PC-9 (cell line): ENCODE measurements at regions of chr10 and their contacts with region 1.

Region 1: DNA sequence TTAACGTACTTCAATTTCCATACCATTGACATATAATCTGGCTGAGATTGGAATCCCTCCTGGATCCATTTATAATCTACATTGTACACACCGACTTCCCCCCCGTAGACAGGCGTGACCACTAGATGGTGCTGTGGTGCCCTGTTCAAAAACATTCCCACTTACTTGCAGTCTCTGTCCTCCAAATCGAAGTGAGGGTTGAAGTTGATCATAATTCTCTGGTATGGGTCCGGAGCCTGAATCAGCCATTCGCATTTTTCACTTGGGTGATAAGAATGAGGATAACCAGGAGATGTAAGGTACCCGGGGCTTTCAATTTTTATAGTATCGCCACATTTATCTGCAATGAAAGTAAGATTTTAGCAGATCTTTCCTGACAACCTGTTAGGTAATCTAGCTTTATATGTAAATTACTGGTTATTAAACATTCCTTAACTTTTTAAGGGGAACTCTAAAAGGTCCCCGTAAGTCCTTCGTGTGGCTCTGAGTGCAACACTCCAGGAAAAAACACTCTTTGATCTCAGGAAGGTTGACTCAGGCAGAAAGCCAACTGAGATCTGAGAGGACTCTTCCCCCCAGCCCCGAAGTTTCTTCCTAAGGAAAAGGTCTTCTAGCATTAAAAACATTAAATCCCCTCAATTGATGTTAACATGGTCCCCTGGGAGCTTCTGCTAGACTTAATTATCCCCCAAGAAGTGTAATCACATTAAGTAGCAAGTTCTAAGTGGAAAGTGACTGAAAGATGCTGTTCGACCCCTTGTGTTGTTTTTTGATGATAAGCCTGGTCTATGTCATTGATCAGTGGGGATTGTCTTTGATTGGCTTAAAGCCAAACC is 3.7 kb downstream of the NRP1 start:
- DNase-seq: peak; percentile 54 to 79
- H3K4me3 ChIP-seq: peak overlapping the region; percentile 92
- H3K27ac ChIP-seq: peak overlapping the region; percentile 28; the same call in 1 of the 2 replicates
- H3K4me1 ChIP-seq: peaks cover 55% of the 10 kb centered on the region
- H3K27me3 ChIP-seq: no peaks in the 10 kb centered on the region
- CTCF ChIP-seq: peak; percentile 80

Region 2: DNA sequence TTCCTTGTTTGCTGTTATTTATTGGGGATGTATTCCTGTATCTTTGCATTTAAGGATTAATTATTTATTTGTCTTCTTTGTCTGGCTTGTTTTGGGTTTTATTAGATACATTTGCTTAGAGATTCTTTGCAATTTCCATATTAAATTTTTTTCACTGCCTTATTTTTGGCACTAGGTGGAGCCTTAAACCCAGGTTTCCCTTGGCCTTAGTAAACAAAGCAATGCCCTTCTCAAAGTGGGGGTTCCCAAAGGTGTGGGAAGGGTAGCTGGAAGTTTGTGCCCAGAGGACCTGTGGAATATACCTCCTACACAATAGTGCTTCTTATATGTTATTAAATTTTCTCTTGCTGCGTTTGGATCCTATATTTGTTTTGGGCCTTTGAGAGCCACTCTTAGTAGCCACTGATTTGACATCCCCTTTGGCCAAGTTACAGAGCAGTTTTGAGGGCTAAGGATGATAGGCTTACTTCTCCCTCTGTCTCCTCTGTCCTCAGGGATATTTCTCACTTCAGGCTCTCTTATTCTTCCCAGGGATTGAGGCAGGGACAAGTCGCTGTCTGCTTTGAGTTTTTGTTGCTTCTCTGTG is 535.1 kb before region 1 on chr10:
- CTCF ChIA-PET with region 1: no interaction called
- POLR2A ChIA-PET with region 1: no interaction called
- intact Hi-C with region 1: loop called (anchors 5 kb)
- DNase-seq: peak in 1 of 2 experiments; percentile 7
- H3K4me3 ChIP-seq: no peak overlapping the region
- H3K27ac ChIP-seq: no peak overlapping the region
- H3K4me1 ChIP-seq: no peaks in the 10 kb centered on the region
- H3K27me3 ChIP-seq: no peaks in the 10 kb centered on the region
- CTCF ChIP-seq: peak; percentile 77

Region 3: GRCh38 chr10:33273295-33274002 is 57.3 kb before region 1 on chr10:
- CTCF ChIA-PET with region 1: no interaction called
- POLR2A ChIA-PET with region 1: interaction called, 3 read pairs
- intact Hi-C with region 1: loop called (anchors 5 kb)
- DNase-seq: peak; percentile 94 to 95
- H3K4me3 ChIP-seq: peak overlapping the region; percentile 45; the same call in 1 of the 2 replicates
- H3K27ac ChIP-seq: peak overlapping the region; percentile 98
- H3K4me1 ChIP-seq: peaks cover 32% of the 10 kb centered on the region
- H3K27me3 ChIP-seq: no peaks in the 10 kb centered on the region
- CTCF ChIP-seq: no peak

Region 4: GRCh38 chr10:33570495-33570894 is 239.7 kb after region 1 on chr10:
- CTCF ChIA-PET with region 1: interaction called, 4 read pairs
- POLR2A ChIA-PET with region 1: no interaction called
- intact Hi-C with region 1: loop called (anchors 10 kb)
- DNase-seq: no peak
- H3K4me3 ChIP-seq: no peak overlapping the region
- H3K27ac ChIP-seq: no peak overlapping the region
- H3K4me1 ChIP-seq: peaks cover 9% of the 10 kb centered on the region; the same call in 1 of the 2 replicates
- H3K27me3 ChIP-seq: no peaks in the 10 kb centered on the region
- CTCF ChIP-seq: no peak

Region 5: DNA sequence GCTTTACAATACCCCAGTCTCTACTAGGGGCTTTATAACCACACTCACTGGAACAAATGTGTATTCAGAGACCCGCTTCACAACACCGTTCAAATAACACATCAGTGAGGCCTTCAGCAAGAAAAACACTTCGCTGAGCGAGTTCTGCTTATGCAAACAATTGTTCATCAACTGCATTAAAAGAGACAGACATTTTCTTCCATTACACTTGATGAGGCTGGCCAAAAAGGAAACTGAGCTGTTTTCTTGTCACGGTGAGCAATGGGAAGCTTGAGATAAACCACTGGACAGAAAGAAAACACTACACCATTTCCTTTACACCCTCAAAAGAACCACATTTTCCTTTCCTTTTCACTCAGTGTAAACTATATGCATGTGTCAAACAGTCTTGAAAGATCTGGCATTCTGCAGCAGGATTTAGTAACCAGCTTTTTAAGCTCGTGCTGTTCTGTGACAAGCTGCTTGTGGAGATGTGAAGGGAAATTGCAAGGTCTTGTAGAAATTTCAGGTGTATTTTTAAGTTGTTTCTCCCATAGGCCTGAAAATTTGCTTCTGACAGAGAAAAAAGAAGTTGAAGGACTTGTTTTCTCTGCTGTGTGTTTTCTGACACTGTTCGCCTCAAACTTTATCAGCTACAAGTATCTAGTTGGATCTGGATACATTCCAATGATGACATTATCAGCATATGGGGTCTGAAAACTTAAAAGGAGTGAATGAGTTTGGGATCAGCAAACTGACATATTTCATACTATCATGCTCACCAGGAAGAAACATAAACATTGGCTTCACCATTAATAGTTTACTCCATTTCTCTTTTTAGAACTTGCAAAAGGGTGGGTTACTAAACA is 791.2 kb after region 1 on chr10:
- CTCF ChIA-PET with region 1: no interaction called
- POLR2A ChIA-PET with region 1: no interaction called
- intact Hi-C with region 1: loop called (anchors 5 kb)
- DNase-seq: no peak
- H3K4me3 ChIP-seq: no peak overlapping the region
- H3K27ac ChIP-seq: no peak overlapping the region
- H3K4me1 ChIP-seq: peaks cover 15% of the 10 kb centered on the region
- H3K27me3 ChIP-seq: no peaks in the 10 kb centered on the region
- CTCF ChIP-seq: no peak

Region 6: DNA sequence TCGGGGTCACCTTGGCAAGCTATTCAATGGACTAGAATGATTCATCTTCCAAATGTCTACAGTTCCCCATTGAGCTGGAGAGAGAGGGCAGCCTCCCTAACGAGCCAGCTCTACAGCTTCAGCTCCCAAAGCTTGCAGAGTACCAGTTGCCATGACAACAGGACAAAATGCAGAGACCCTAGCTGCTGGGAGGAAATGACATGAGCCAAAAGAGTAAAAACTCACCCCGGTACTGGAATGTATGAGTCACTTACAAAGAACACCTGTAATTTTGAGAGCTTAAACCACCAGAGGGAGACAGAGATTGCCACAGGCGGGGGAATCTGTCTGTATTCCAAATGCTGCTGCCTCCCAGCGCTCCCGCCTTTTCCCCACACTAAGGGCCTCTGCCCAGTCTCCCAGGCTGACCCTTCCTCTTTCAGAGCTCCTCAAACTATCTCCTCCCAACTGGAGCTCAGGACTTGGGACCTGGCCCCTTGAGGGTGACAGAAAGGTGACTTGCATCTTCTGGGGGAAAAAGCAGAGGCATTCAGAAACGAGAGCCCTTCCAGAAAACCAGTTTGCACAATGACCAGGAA is 1663.9 kb after region 1 on chr10:
- CTCF ChIA-PET with region 1: no interaction called
- POLR2A ChIA-PET with region 1: no interaction called
- intact Hi-C with region 1: loop called (anchors 5 kb)
- DNase-seq: peak; percentile 69 to 80
- H3K4me3 ChIP-seq: no peak overlapping the region
- H3K27ac ChIP-seq: no peak overlapping the region
- H3K4me1 ChIP-seq: peaks cover 28% of the 10 kb centered on the region
- H3K27me3 ChIP-seq: no peaks in the 10 kb centered on the region
- CTCF ChIP-seq: peak; percentile 78